ENCODE measurements at regions of chr19 and their contacts with region 1.

Region 1: DNA sequence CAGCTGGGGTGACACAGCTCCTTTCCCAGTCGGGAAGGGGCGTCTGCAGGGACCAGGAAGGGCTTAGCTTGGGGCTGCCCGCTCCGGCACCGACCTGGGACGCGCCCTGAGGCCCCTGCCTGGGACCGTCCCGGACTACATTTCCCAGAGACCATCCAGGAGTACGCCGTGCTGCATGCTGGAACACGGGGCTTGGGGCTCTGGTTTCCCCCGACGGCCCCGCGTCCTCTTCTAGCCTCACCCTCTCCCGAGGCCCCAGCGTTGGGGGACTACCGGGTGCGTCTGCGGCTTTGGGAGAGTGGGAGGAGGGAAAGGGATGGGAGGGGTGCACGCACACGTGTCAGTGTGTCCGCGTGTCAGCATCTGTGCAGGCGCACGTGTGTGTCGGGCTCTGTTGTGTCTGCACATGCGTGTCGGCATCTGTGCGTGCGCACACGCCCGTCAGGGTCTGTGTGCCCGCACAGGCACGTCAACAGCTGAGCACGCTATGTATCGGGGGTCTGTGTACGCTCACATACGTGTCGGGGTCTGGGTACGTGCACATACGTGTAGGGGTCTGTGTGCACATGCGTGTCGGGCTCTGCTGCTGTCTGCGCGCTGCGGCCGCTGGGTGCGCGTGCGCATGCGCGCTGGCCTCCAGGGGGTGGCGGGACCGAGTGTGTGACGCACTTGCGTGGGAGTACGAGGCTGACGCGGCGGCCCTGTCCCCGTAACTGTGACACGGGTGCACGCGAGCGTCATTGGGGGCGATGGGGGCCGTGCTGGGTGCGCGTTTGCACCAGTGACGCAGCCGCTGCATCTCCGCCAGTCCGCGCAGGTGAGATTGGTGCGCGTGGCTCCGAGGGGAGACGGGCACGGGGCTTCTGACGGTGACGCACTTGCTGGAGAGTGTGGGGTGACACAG is at the start of gene ZNF331:
- DNase-seq: peak; percentile 91
- H3K4me3 Mint-ChIP-seq: peak within 1 kb of the TSS; percentile 96
- H3K27ac Mint-ChIP-seq: peak within 1 kb of the TSS; percentile 98
- H3K4me1 Mint-ChIP-seq: peaks cover 31% of the 10 kb centered on the region
- H3K27me3 Mint-ChIP-seq: peaks cover 4% of the 10 kb centered on the region
- total RNA-seq, gene ZNF331: 20.8 to 23.1 TPM

Region 2: GRCh38 chr19:53308339-53308811 is 229.4 kb before region 1 on chr19:
- CTCF ChIA-PET with region 1: no interaction called
- POLR2A ChIA-PET with region 1: no interaction called
- intact Hi-C with region 1: no loop called
- DNase-seq: peak; percentile 34
- H3K4me3 Mint-ChIP-seq: no peak overlapping the region
- H3K27ac Mint-ChIP-seq: no peak overlapping the region
- H3K4me1 Mint-ChIP-seq: no peaks in the 10 kb centered on the region
- H3K27me3 Mint-ChIP-seq: peaks cover 22% of the 10 kb centered on the region

Region 3: DNA sequence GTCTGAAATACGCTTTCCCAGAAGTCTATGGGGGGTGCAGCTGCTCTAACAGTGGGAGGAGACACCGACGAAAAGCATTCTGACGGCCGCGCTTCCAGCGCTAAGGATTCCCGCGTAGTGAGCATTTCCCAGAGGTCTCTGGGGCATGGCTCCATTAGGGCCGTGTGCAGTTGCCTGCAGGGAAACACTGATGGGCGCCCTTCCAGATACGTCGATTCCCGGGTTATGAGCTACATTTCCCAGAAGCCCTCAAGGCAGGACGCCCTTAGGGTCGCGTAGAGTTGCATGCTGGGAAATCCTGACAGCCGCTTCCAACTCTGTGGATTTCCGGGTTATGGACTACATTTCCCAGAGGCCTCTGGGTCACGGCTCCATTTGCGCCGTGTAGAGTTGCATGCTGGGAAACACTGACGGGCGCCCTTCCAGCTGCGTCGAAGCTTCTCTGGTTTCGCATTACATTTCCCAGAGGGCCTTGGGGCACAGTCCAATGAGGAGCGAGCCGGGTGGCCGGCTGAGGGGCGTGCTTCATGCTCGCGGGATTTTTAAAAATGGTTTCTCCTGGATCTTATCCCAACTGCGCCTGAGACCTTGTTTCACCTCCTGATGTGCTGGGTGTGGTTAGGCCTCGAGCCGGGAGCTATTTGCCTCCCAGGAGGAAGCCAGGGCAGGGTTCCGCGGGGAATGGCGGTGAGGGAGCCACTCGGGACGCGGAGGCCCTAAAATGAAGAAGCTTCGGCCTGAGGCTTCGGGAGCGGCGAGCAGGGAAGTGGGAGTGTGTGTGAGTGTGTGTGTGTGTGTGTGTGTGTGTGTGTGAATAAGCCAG is 17.0 kb before region 1 on chr19:
- CTCF ChIA-PET with region 1: no interaction called
- POLR2A ChIA-PET with region 1: interaction called, 6 read pairs
- intact Hi-C with region 1: loop called (anchors 1 kb)
- DNase-seq: peak; percentile 93
- H3K4me3 Mint-ChIP-seq: peak overlapping the region; percentile 99
- H3K27ac Mint-ChIP-seq: peak overlapping the region; percentile 89
- H3K4me1 Mint-ChIP-seq: peaks cover 19% of the 10 kb centered on the region
- H3K27me3 Mint-ChIP-seq: no peaks in the 10 kb centered on the region

Region 4: DNA sequence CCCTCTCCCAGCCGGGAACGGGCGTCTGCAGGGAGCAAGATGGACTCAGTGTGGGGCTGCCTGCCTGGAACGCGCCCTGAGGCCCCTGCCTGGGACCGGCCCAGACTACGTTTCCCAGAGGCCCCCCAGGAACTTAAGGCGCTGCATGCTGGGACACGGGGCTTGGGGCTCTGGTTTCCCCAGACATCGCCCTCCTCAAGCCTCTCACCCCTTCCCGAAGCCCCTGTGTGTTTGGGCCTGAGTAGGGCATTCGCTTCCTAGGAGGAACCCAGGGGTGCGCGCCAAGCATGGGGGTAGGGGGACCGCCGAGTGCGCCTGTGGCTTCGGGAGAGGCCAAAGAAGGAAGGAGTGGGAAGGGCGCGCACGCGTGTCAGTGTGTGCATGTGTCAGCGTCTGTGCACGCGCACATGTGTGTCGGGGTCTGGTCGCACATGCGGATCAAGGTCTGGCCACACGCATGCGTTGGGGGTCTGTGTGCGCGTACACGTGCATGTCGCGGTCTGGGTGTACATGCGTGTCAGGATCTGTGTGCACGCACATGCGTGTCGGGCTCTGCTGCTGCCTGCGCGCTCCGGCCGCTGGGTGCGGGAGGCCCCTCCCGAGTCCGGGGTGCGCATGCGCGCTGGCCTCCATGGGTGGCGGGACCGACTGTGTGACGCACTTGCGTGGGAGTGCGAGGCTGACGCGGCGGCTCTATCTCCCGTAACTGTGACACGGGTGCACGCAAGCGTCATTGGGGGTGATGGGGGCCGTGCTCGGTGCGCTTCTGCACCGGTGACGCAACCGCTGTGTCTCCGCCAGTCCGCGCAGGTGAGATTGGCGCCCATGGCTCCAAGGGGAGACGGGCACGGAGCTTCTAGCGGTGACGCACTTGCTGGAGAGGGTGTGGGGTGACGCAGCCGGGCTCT is 16.4 kb after region 1 on chr19:
- CTCF ChIA-PET with region 1: no interaction called
- POLR2A ChIA-PET with region 1: interaction called, 5 read pairs
- intact Hi-C with region 1: loop called (anchors 1 kb)
- DNase-seq: peak; percentile 95
- H3K4me3 Mint-ChIP-seq: peak overlapping the region; percentile 83
- H3K27ac Mint-ChIP-seq: peak overlapping the region; percentile 95
- H3K4me1 Mint-ChIP-seq: peaks cover 25% of the 10 kb centered on the region
- H3K27me3 Mint-ChIP-seq: no peaks in the 10 kb centered on the region